ENCODE measurements at regions of chr1 and their contacts with region 1.

Region 1: DNA sequence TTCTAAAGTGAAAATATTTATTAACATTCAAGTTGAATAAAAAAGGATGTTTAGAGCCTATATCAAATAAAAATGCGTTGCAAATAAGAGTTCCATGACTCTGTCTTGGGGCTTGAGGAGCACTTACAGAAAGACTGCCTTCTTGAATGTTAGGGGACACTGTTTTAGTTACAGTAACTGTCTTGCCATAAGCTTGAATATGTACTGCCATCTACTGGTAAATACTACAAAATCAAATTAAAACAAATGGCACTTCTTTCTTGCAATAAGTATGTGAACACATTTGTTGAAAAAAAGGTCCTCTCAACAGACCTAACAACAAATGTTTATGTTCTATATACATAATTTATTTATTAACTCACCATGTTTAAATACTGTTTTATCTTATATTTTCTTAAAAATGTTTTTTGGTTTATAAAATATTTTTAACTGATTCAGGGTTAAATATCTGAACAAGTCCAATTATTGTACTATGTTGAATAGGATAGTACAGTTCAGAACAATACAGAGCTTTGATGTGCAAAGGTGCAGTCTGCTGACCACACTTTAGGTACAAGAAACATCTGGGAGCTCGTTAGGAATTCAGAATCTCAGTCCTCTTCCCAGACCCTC is 199.5 kb downstream of the LRRIQ3 start:
- DNase-seq: no peak
- H3K4me3 ChIP-seq: no peak overlapping the region
- H3K27ac ChIP-seq: no peak overlapping the region
- H3K4me1 ChIP-seq: no peaks in the 10 kb centered on the region
- H3K27me3 ChIP-seq: no peaks in the 10 kb centered on the region
- CTCF ChIP-seq: peak in 2 of 3 experiments; percentile 29 to 39; a peak in 2 of 4 replicates
- EP300 ChIP-seq: no peak
- POLR2A ChIP-seq: no peak
- RAD21 ChIP-seq: peak; percentile 75 to 83

Region 2: DNA sequence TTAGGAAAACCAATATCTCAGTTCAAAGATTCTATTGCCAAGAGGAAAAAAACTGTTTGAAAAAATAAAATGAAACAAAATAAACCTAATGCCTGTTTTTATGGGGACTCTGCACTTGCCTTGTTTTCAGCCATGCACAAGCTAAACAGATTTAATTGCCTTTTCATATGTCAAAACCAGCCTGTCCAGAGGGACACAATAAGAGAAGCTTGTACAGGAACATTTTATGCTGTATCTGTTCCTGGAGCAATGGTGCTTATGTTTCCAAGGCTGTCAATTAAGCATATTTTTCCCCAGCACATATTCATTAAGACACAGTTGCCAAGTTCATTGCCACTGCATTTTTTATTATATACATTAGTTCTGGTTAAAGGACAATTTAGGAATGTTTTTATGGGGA is 271.4 kb before region 1 on chr1:
- CTCF ChIA-PET with region 1: no interaction called
- POLR2A ChIA-PET with region 1: no interaction called
- DNase-seq: no peak
- H3K4me3 ChIP-seq: no peak overlapping the region
- H3K27ac ChIP-seq: no peak overlapping the region
- H3K4me1 ChIP-seq: no peaks in the 10 kb centered on the region
- H3K27me3 ChIP-seq: no peaks in the 10 kb centered on the region
- CTCF ChIP-seq: no peak
- EP300 ChIP-seq: no peak
- POLR2A ChIP-seq: no peak
- RAD21 ChIP-seq: no peak

Region 3: GRCh38 chr1:73839922-73840321 is 158.5 kb before region 1 on chr1:
- CTCF ChIA-PET with region 1: interaction called, 12 read pairs
- POLR2A ChIA-PET with region 1: no interaction called
- DNase-seq: no peak
- H3K4me3 ChIP-seq: no peak overlapping the region
- H3K27ac ChIP-seq: no peak overlapping the region
- H3K4me1 ChIP-seq: no peaks in the 10 kb centered on the region
- H3K27me3 ChIP-seq: no peaks in the 10 kb centered on the region
- CTCF ChIP-seq: peak in 2 of 3 experiments; percentile 35 to 56; a peak in 3 of 4 replicates
- EP300 ChIP-seq: no peak
- POLR2A ChIP-seq: no peak
- RAD21 ChIP-seq: peak; percentile 69 to 72